CD4-positive, alpha-beta memory T cell (primary cell): ENCODE measurements at regions of chr22 and their contacts with region 1.

Region 1: DNA sequence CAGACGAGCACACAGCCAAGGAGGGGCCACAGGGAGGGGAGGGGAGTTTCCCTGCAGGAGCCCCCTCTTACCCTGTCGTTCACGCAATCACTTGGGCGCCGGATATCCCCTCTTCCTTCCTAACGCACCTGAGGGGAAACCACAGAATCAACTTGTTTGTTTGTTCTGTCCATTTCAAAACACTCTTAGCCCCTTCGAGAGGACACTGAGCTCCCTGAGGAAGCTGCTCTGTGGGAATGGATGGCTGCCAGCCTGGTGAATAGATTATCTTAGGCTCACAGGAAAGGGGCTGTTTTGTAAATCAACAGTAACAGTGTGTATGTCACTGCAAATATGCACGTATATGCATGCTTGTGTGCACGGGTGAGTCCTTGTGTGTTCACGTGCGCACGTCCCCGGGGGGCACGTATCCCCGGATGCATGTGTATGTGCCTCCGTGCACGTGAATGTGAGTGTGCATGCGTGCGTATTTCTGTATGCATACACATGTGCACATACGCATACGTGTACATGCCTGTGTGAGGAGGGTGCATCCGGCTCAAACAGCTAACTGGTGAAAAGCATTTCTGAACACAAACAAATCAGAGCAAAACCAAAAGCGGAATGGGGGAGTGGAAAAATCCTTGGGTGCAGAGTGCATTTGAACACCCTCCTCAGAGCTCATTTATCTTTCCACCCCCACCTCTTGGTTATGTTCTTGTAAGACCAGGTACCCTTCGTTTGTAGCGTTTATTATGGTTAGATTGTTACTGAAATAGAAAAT is 7.2 kb downstream of the ARSA start:
- DNase-seq: peak; percentile 77 to 95 (median 83)
- H3K4me3 ChIP-seq: peak overlapping the region; percentile 12 to 80
- H3K4me3 Mint-ChIP-seq: peak overlapping the region; percentile 91 to 96 (median 93)
- H3K27ac ChIP-seq: peak overlapping the region; percentile 85
- H3K27ac Mint-ChIP-seq: peak overlapping the region; percentile 94 to 99 (median 99)
- H3K4me1 ChIP-seq: peaks cover 34% of the 10 kb centered on the region
- H3K4me1 Mint-ChIP-seq: peaks cover 21 to 37% (median 29%) of the 10 kb centered on the region in 4 donors
- H3K27me3 ChIP-seq: no peaks in the 10 kb centered on the region
- H3K27me3 Mint-ChIP-seq: no peaks in the 10 kb centered on the region

Region 2: GRCh38 chr22:50250555-50251476 is 370.0 kb before region 1 on chr22 and contains the start of gene HDAC10:
- CTCF ChIA-PET with region 1: interaction called, 10 read pairs
- POLR2A ChIA-PET with region 1: interaction called, 29 read pairs
- intact Hi-C with region 1: loop called (anchors 2 kb)
- DNase-seq: peak; percentile 71 to 78 (median 74)
- H3K4me3 ChIP-seq: peak within 1 kb of the TSS; percentile 36 to 89
- H3K4me3 Mint-ChIP-seq: peak within 1 kb of the TSS; percentile 73 to 84 (median 78)
- H3K27ac ChIP-seq: peak within 1 kb of the TSS; percentile 66
- H3K27ac Mint-ChIP-seq: peak within 1 kb of the TSS in 6 of 7 donors; percentile 50 to 88 (median 64)
- H3K4me1 ChIP-seq: peaks cover 44% of the 10 kb centered on the region
- H3K4me1 Mint-ChIP-seq: peaks cover 7 to 29% (median 17%) of the 10 kb centered on the region in 4 donors
- H3K27me3 ChIP-seq: no peaks in the 10 kb centered on the region
- H3K27me3 Mint-ChIP-seq: peaks cover 1 to 2% of the 10 kb centered on the region in 2 donors
- total RNA-seq, gene HDAC10: 141 to 151 TPM

Region 3: GRCh38 chr22:50399751-50400331 is 220.9 kb before region 1 on chr22:
- CTCF ChIA-PET with region 1: interaction called, 8 read pairs
- POLR2A ChIA-PET with region 1: interaction called, 3 read pairs
- intact Hi-C with region 1: loop called (anchors 2 kb)
- DNase-seq: peak in 2 of 5 donors; percentile 12 to 15
- H3K4me3 ChIP-seq: no peak overlapping the region
- H3K4me3 Mint-ChIP-seq: no peak overlapping the region
- H3K27ac ChIP-seq: no peak overlapping the region
- H3K27ac Mint-ChIP-seq: peak overlapping the region in 6 of 7 donors; percentile 57 to 84 (median 76)
- H3K4me1 ChIP-seq: peaks cover 7% of the 10 kb centered on the region
- H3K4me1 Mint-ChIP-seq: peaks cover 13 to 28% (median 18%) of the 10 kb centered on the region in 4 donors
- H3K27me3 ChIP-seq: no peaks in the 10 kb centered on the region
- H3K27me3 Mint-ChIP-seq: no peaks in the 10 kb centered on the region

Region 4: DNA sequence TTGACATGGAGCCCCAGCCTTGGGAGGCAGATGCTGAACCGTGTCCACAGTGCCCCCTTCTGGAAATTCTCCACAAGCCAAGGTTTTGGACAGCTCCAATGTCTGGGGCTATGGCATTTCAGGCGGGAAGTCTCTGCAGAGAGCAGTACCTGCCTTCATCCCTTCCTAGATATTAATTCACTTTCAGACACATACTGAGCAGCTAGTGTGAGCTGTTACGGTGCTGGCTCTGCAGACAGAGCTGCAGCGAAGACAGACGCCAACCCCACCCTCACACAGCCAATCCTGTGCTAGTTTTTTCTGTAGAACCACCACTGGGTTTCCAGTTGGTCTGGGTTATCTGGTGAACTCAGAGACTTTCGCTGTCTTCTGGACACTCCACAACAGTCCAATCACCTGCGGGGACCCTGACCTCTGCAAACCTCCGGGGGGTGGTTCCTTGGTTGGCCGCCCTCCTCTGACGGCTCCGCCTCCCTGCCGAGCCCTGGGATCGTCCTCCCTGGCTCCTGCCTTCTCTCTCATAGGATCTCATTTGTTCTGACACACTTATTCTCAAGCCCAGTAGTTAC is 122.4 kb before region 1 on chr22:
- CTCF ChIA-PET with region 1: interaction called, 7 read pairs
- POLR2A ChIA-PET with region 1: interaction called, 5 read pairs
- intact Hi-C with region 1: loop called (anchors 1 kb)
- DNase-seq: peak; percentile 66 to 69 (median 68)
- H3K4me3 ChIP-seq: no peak overlapping the region
- H3K4me3 Mint-ChIP-seq: no peak overlapping the region
- H3K27ac ChIP-seq: no peak overlapping the region
- H3K27ac Mint-ChIP-seq: peak overlapping the region in 1 of 7 donors; percentile 30
- H3K4me1 ChIP-seq: peaks cover 3% of the 10 kb centered on the region
- H3K4me1 Mint-ChIP-seq: peaks cover 0 to 5% (median under 1%) of the 10 kb centered on the region in 4 donors
- H3K27me3 ChIP-seq: no peaks in the 10 kb centered on the region
- H3K27me3 Mint-ChIP-seq: no peaks in the 10 kb centered on the region

Region 5: DNA sequence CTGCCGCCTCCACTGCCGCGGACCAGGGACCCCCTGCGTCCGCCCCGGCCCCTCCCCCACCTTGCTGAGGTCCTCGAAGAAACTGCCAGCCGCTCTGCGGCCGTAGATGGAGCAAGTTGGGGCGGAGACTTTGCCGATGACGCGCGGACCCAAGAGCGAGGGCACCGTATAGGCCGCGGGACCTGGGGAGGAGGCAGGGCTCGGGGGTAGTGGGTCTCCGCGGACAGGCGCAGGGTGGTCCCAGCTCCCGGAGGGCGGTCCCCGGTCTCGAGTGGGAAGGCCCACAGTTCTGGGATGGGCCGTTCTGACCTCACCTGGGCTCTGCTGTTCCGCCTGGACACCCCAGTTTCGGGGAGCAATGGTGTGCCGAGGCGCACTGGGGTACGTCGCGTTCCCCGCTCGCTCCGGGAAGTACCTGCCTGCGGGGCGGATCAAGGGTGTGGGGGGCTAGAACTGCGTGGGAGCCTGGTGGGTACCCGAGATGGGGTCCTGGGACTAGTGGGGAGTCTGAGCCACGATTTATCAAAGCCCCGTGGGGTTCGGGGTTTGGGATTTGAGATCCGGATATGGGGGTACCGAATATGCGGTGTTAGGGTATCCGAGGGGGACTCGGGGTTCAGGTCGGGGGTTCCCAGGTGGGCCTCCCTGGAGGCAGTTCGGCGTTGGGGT is 89.8 kb before region 1 on chr22:
- CTCF ChIA-PET with region 1: interaction called, 58 read pairs
- POLR2A ChIA-PET with region 1: interaction called, 160 read pairs
- intact Hi-C with region 1: loop called (anchors 1 kb)
- DNase-seq: peak; percentile 72 to 82 (median 77)
- H3K4me3 ChIP-seq: peak overlapping the region; percentile 76 to 94
- H3K4me3 Mint-ChIP-seq: peak overlapping the region; percentile 89 to 95 (median 92)
- H3K27ac ChIP-seq: peak overlapping the region; percentile 96
- H3K27ac Mint-ChIP-seq: peak overlapping the region; percentile 96 to 99 (median 97)
- H3K4me1 ChIP-seq: peaks cover 54% of the 10 kb centered on the region
- H3K4me1 Mint-ChIP-seq: peaks cover 15 to 54% (median 38%) of the 10 kb centered on the region in 4 donors
- H3K27me3 ChIP-seq: no peaks in the 10 kb centered on the region
- H3K27me3 Mint-ChIP-seq: no peaks in the 10 kb centered on the region

Region 6: DNA sequence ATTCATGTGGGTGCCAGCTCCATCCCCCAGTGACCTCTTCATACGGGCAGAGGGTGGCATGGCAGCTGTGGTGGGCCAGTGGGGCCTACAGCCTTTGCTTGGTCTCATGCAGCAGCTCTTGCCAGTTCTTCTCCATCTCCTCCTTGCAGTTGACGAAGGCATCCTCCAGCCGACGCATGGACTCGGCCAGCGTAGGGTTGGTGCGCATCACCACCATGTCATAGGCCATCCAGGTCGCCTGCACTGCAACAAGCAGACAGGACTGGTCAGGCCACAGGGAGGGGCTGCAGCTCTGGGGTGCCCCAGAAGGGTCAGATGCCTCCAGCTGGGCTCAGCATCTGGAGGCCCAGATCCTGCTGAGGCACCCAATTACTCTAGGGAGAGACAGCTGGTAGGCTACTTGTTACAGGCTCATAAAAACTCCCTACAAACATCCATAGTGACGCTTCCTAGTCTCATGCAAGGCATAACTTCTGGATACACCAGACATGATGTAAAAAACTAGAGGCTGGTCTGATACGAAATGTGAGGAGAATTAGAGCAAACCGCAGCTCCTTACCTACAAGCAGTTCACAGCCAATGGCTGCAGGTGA is 69.5 kb before region 1 on chr22:
- CTCF ChIA-PET with region 1: interaction called, 18 read pairs
- POLR2A ChIA-PET with region 1: interaction called, 34 read pairs
- intact Hi-C with region 1: no loop called
- DNase-seq: no peak
- H3K4me3 ChIP-seq: no peak overlapping the region
- H3K4me3 Mint-ChIP-seq: peak overlapping the region in 5 of 8 donors; percentile 28 to 76 (median 40)
- H3K27ac ChIP-seq: no peak overlapping the region
- H3K27ac Mint-ChIP-seq: peak overlapping the region in 3 of 7 donors; percentile 12 to 48 (median 32)
- H3K4me1 ChIP-seq: peaks cover 27% of the 10 kb centered on the region
- H3K4me1 Mint-ChIP-seq: peaks cover 12 to 26% (median 18%) of the 10 kb centered on the region in 4 donors
- H3K27me3 ChIP-seq: no peaks in the 10 kb centered on the region
- H3K27me3 Mint-ChIP-seq: no peaks in the 10 kb centered on the region

Region 7: GRCh38 chr22:50691521-50691920 is 70.7 kb after region 1 on chr22:
- CTCF ChIA-PET with region 1: interaction called, 3 read pairs
- POLR2A ChIA-PET with region 1: interaction called, 4 read pairs
- intact Hi-C with region 1: loop called (anchors 1 kb)
- DNase-seq: peak in 4 of 5 donors; percentile 27 to 33 (median 30)
- H3K4me3 ChIP-seq: no peak overlapping the region
- H3K4me3 Mint-ChIP-seq: no peak overlapping the region
- H3K27ac ChIP-seq: no peak overlapping the region
- H3K27ac Mint-ChIP-seq: no peak overlapping the region
- H3K4me1 ChIP-seq: no peaks in the 10 kb centered on the region
- H3K4me1 Mint-ChIP-seq: no peaks in the 10 kb centered on the region
- H3K27me3 ChIP-seq: no peaks in the 10 kb centered on the region
- H3K27me3 Mint-ChIP-seq: peaks cover 4% of the 10 kb centered on the region in 2 donors